ENCODE measurements at regions of chr15 and their contacts with region 1.

Region 1: DNA sequence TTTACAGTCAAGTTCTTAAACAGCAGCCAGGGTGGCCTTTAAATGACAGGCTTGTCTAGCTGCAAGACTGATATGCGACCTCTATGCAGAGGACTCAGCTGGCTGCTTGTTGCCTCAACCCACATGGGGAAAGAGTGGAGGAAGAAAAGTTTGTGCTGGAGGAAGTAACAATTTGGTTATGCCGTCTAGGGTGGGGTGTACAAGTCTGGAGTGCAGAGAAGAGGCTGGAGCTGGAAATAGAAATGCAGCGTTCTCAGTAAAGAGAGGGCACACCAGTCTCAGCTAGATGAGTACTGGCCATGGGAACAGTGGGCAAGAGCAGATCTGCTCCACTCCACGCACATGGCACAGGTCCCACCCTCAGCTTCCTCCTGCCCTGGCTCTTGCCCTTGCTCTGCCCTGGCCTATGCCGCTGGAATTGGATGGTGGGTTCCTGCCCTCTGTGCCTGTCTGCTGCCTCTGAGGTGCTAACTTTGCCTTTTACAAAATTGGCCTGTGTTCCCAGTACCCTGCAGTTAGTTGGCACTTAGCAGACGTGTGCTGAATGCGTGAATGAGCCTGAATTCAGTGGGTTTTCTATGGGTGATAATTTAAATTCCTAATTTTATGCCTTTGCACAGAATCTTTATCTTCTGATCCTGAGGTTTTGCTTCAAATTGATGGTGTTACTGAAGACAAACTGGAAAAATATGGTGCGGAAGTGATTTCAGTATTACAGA is 59.7 kb upstream of the FURIN start:
- DNase-seq: no peak
- H3K4me3 Mint-ChIP-seq: no peak overlapping the region
- H3K27ac Mint-ChIP-seq: peak overlapping the region; percentile 86
- H3K4me1 Mint-ChIP-seq: peaks cover 69% of the 10 kb centered on the region
- H3K27me3 Mint-ChIP-seq: no peaks in the 10 kb centered on the region

Region 2: DNA sequence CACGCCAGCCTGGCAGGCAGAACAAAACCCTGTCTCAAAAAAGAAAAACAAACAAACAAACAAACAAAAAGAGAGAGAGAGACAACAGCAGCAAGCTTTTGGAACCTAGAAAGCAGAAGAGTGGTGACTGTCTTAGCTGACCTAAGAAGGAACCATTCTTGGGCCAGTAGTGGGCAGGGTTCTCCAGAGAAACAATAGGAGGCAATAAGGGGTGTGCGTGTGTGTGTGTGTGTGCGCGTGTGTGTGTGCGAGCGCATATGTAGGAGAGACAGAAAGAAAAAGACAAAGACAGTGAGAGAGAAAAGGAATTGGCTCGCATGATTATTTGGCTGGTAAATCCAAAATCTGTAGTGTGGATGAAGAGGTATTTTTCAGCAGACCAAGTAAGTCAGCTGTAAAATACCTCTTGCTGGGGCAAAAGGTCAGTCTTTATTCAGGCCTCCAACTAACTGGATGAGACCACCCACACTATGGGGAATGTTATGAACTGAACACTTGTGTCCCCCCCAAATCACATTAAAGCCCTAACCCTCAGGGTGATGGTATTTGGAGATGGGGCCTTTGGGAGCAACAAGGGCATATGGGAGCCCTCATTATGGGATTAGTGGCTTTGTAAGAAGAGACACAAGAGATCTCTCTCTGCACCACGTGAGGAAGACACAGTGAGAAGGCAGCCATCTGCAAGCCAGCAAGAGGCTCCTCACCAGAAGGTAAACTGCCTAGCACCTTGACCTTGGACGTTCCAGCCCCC is 106.6 kb before region 1 on chr15:
- CTCF ChIA-PET with region 1: no interaction called
- POLR2A ChIA-PET with region 1: no interaction called
- DNase-seq: no peak
- H3K4me3 Mint-ChIP-seq: no peak overlapping the region
- H3K27ac Mint-ChIP-seq: no peak overlapping the region
- H3K4me1 Mint-ChIP-seq: peaks cover 13% of the 10 kb centered on the region
- H3K27me3 Mint-ChIP-seq: no peaks in the 10 kb centered on the region

Region 3: GRCh38 chr15:90851114-90851513 is 42.4 kb after region 1 on chr15:
- CTCF ChIA-PET with region 1: interaction called, 4 read pairs
- POLR2A ChIA-PET with region 1: interaction called, 157 read pairs
- DNase-seq: peak; percentile 80
- H3K4me3 Mint-ChIP-seq: peak overlapping the region; percentile 63
- H3K27ac Mint-ChIP-seq: peak overlapping the region; percentile 91
- H3K4me1 Mint-ChIP-seq: peaks cover 77% of the 10 kb centered on the region
- H3K27me3 Mint-ChIP-seq: no peaks in the 10 kb centered on the region

Region 4: GRCh38 chr15:90869601-90870353 is 61.1 kb after region 1 on chr15:
- CTCF ChIA-PET with region 1: interaction called, 5 read pairs
- POLR2A ChIA-PET with region 1: interaction called, 64 read pairs
- DNase-seq: peak; percentile 63
- H3K4me3 Mint-ChIP-seq: peak overlapping the region; percentile 85
- H3K27ac Mint-ChIP-seq: peak overlapping the region; percentile 91
- H3K4me1 Mint-ChIP-seq: peaks cover 59% of the 10 kb centered on the region
- H3K27me3 Mint-ChIP-seq: no peaks in the 10 kb centered on the region

Measured in activated CD4-positive, alpha-beta memory T cell treated with anti-CD3 and anti-CD28 coated beads, Interleukin-2, amount 10 ng/mL, durations not matched to agents 7 days and 5 days (primary cell).